HepG2 (cell line): ENCODE measurements at regions of chr13 and their contacts with region 1.

Region 1: GRCh38 chr13:46146899-46147298 is 35.1 kb downstream of the LCP1 start:
- DNase-seq: peak; percentile 56
- ATAC-seq: peak; percentile 70
- H3K4me3 ChIP-seq: no peak overlapping the region
- H3K27ac ChIP-seq: no peak overlapping the region
- H3K4me1 ChIP-seq: peaks cover 60% of the 10 kb centered on the region
- H3K27me3 ChIP-seq: no peaks in the 10 kb centered on the region
- CTCF ChIP-seq: peak; percentile 91
- EP300 ChIP-seq: no peak
- POLR2A ChIP-seq: no peak
- RAD21 ChIP-seq: peak; percentile 84

Region 2: GRCh38 chr13:46106839-46107371 is 40.0 kb before region 1 on chr13:
- CTCF ChIA-PET with region 1: no interaction called
- POLR2A ChIA-PET with region 1: interaction called, 10 read pairs
- in situ Hi-C with region 1: no loop called
- intact Hi-C with region 1: loop called (anchors 5 kb)
- DNase-seq: no peak
- ATAC-seq: no peak
- H3K4me3 ChIP-seq: no peak overlapping the region
- H3K27ac ChIP-seq: peak overlapping the region; percentile 29
- H3K4me1 ChIP-seq: peaks cover 87% of the 10 kb centered on the region
- H3K27me3 ChIP-seq: no peaks in the 10 kb centered on the region
- CTCF ChIP-seq: no peak
- EP300 ChIP-seq: no peak
- POLR2A ChIP-seq: no peak
- RAD21 ChIP-seq: no peak

Region 3: DNA sequence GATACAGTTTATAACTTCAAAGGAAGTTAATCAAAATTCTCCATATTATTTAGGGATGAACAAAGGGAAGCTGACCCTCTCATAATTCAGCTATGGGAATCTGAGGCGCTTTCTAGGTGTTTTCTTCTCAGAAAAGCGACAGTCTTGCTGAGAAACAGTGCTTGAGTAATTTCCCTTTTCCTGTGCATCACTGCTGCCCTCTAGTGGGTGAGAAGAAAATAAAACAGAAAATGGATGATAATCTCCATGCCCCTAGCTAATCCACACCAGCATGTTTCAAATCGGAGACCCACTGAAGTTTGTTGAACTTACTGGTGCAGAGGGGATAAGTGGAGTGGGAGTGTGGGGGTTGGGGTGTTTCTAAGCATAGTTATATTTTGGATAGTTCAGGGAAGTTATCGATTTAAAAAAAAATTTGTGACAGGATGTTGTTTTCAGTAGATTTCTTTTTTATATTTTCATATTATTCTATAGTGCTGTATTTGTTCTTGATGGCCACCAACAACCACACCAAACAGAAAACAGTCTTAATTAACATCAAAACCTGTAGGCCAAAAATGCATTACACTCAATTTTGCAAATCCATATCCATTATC is 13.7 kb after region 1 on chr13:
- CTCF ChIA-PET with region 1: interaction called, 17 read pairs
- POLR2A ChIA-PET with region 1: interaction called, 4 read pairs
- in situ Hi-C with region 1: no loop called
- intact Hi-C with region 1: loop called (anchors 1 kb)
- DNase-seq: peak; percentile 58
- ATAC-seq: peak; percentile 64
- H3K4me3 ChIP-seq: no peak overlapping the region
- H3K27ac ChIP-seq: no peak overlapping the region
- H3K4me1 ChIP-seq: peaks cover 14% of the 10 kb centered on the region
- H3K27me3 ChIP-seq: no peaks in the 10 kb centered on the region
- CTCF ChIP-seq: peak; percentile 82
- EP300 ChIP-seq: no peak
- POLR2A ChIP-seq: no peak
- RAD21 ChIP-seq: peak; percentile 71

Region 4: DNA sequence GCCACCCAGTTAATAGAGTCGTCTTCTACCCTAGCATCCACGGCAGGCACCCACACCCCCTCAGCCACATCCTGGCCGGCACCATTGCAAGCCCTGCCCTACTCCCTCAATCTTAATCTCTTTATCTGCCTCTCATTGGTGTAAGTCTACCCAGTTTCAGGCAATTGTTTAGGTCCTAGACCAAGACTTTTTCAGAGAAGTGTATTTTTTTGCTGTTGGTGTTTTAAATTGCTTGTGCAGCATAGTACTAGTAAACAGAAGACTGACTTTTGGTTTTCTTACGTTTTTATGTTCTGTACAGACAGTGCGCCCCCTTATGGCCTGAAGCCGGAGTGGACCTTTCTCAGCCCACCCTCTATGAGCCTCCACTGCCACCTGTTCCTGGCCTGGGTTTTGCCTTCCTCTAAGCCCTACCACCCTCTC is 37.4 kb after region 1 on chr13:
- CTCF ChIA-PET with region 1: interaction called, 9 read pairs
- POLR2A ChIA-PET with region 1: no interaction called
- in situ Hi-C with region 1: no loop called
- intact Hi-C with region 1: loop called (anchors 1 kb)
- DNase-seq: peak; percentile 28
- ATAC-seq: peak; percentile 99
- H3K4me3 ChIP-seq: peak overlapping the region in 1 of 3 experiments; percentile 40; a peak in 1 of 6 replicates
- H3K27ac ChIP-seq: no peak overlapping the region
- H3K4me1 ChIP-seq: peaks cover 10% of the 10 kb centered on the region; the same call in 1 of the 2 replicates
- H3K27me3 ChIP-seq: 0 out of 5 replicates have a peak, but pooled peaks cover 0 to 4% of the 10 kb centered on the region in 2 experiments
- CTCF ChIP-seq: peak; percentile 66
- EP300 ChIP-seq: no peak
- POLR2A ChIP-seq: no peak
- RAD21 ChIP-seq: no peak

Region 5: DNA sequence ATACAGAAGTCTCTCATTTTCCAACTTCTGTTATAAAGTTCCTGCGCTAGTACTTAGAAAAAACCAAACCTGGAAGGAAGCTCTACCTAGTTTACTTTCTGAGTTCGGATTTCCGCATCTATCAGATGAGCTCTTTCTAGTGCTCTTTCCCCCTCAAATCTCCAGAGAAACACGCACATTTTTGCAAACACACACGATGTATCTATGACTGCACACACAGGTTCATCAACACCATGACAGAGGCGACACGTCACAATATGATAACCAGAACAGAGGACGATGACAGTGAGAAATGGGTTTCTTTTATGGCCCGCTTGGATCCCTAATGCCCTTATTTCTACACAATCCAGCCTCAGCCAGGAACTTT is 64.2 kb after region 1 on chr13:
- CTCF ChIA-PET with region 1: no interaction called
- POLR2A ChIA-PET with region 1: no interaction called
- in situ Hi-C with region 1: no loop called
- intact Hi-C with region 1: no loop called
- DNase-seq: no peak
- ATAC-seq: peak; percentile 49
- H3K4me3 ChIP-seq: peak overlapping the region in 2 of 3 experiments; percentile 38 to 68; a peak in 3 of 6 replicates
- H3K27ac ChIP-seq: no peak overlapping the region
- H3K4me1 ChIP-seq: peaks cover 15% of the 10 kb centered on the region
- H3K27me3 ChIP-seq: peaks cover 6 to 31% of the 10 kb centered on the region in 2 experiments
- CTCF ChIP-seq: no peak
- EP300 ChIP-seq: no peak
- POLR2A ChIP-seq: no peak
- RAD21 ChIP-seq: no peak

Region 6: GRCh38 chr13:46288570-46289259 is 141.8 kb after region 1 on chr13:
- CTCF ChIA-PET with region 1: interaction called, 3 read pairs
- POLR2A ChIA-PET with region 1: no interaction called
- in situ Hi-C with region 1: no loop called
- intact Hi-C with region 1: loop called (anchors 1 kb)
- DNase-seq: peak; percentile 27
- ATAC-seq: peak; percentile 81
- H3K4me3 ChIP-seq: no peak overlapping the region
- H3K27ac ChIP-seq: no peak overlapping the region
- H3K4me1 ChIP-seq: no peaks in the 10 kb centered on the region
- H3K27me3 ChIP-seq: 0 out of 5 replicates have a peak, but pooled peaks cover 0 to 2% of the 10 kb centered on the region in 2 experiments
- CTCF ChIP-seq: peak; percentile 55
- EP300 ChIP-seq: no peak
- POLR2A ChIP-seq: no peak
- RAD21 ChIP-seq: no peak

Region 7: GRCh38 chr13:46679369-46680120 is 532.6 kb after region 1 on chr13:
- CTCF ChIA-PET with region 1: no interaction called
- POLR2A ChIA-PET with region 1: no interaction called
- in situ Hi-C with region 1: loop called (anchors 10 kb)
- intact Hi-C with region 1: no loop called
- DNase-seq: peak; percentile 9
- ATAC-seq: peak; percentile 55
- H3K4me3 ChIP-seq: no peak overlapping the region
- H3K27ac ChIP-seq: no peak overlapping the region
- H3K4me1 ChIP-seq: peaks cover 83% of the 10 kb centered on the region
- H3K27me3 ChIP-seq: no peaks in the 10 kb centered on the region
- CTCF ChIP-seq: no peak
- EP300 ChIP-seq: no peak
- POLR2A ChIP-seq: no peak
- RAD21 ChIP-seq: no peak